Adrenal gland (tissue), 19 donors: ENCODE measurements at regions of chr18 and their contacts with region 1.

Region 1: GRCh38 chr18:5879479-5879882 is 15.8 kb downstream of the TMEM200C start:
- DNase-seq: no peak
- H3K4me3 ChIP-seq: no peak overlapping the region
- H3K27ac ChIP-seq: no peak overlapping the region
- H3K4me1 ChIP-seq: no peaks in the 10 kb centered on the region
- H3K27me3 ChIP-seq: no peaks in the 10 kb centered on the region
- CTCF ChIP-seq: peak; percentile 67 to 88 (median 80)
- POLR2A ChIP-seq: no peak

Region 2: DNA sequence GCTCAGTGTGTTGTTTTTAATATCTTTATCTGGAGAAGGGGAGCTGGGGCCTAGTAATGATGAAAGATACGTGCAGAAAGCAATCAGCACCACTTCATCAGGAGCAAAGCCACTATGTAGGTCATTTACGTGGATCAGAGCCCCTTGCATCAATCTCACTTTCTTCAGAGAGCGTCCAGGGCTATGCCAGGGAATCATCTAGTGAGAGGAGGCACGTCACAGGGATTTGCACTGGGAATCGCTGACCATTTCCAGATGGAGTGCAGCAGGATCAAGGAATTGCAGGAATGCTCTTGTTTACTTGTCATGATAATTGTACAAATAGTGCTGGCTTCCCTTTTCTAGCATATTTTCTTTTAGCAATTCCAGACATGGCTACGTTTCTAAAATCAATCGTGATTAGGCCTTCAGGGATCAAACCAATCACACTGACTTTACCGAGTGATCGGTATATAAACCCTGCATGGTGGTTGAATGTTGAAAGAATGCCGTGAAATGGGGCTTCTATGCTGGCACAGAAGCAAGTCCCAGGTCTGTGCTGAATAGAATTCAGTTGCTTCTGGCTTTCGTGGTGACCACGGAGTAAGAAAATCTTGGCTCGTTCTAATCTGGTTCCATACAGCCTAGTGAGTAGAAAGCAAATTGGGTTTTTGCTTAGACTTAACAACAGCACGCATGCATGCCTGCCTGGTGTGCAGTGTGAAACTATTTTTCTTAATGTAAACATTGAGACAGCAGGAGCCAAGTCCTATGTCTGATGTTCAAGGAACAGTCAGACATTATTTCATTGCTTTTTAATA is 107.0 kb before region 1 on chr18:
- intact Hi-C with region 1: no loop called
- DNase-seq: no peak
- H3K4me3 ChIP-seq: no peak overlapping the region
- H3K27ac ChIP-seq: no peak overlapping the region
- H3K4me1 ChIP-seq: no peaks in the 10 kb centered on the region
- H3K27me3 ChIP-seq: no peaks in the 10 kb centered on the region
- CTCF ChIP-seq: no peak
- POLR2A ChIP-seq: no peak

Region 3: GRCh38 chr18:6221602-6222014 is 342.1 kb after region 1 on chr18:
- intact Hi-C with region 1: loop called in 1 of 2 experiments (anchors 5 kb)
- DNase-seq: no peak
- H3K4me3 ChIP-seq: no peak overlapping the region
- H3K27ac ChIP-seq: no peak overlapping the region
- H3K4me1 ChIP-seq: no peaks in the 10 kb centered on the region
- H3K27me3 ChIP-seq: no peaks in the 10 kb centered on the region
- CTCF ChIP-seq: no peak
- POLR2A ChIP-seq: no peak

Region 4: DNA sequence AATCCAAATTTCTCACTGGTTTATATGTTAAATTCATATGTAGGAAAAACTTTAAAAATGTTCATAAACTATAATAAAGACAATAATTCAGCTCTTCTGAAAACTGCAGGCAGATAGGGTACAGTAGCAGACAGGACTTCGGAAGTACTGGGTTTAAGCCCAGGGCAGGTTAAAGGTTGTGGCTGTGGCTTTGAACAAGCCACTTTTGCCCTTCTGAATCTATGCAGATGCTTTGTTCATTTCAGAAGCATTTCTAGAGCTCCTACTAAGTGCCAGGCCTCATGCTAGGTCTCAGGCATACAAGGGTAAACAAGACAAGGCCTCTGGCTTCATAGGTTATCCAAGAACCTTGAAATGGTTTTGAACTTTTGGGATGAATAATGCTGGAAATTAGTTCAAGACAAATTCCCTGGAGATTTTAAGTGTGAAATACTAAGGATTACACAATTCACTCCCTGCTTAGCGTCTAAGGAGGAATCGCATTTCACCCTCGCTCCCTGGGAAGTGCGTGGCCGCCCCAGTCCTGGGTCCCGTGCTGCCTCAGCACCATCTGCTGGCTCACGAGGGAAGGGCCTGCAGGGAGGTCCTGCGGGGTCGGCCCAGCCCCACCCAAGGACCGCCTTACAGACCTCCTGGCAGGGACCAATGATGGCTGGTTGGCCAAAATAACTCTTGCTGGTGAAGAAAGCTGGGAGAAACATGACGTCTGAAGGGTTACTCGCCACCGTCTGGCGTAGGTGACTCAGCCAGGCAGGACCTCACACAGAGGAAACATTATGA is 602.9 kb after region 1 on chr18:
- intact Hi-C with region 1: loop called (anchors 5 kb)
- DNase-seq: peak; percentile 63 to 85 (median 79)
- H3K4me3 ChIP-seq: no peak overlapping the region
- H3K27ac ChIP-seq: no peak overlapping the region
- H3K4me1 ChIP-seq: no peaks in the 10 kb centered on the region
- H3K27me3 ChIP-seq: no peaks in the 10 kb centered on the region
- CTCF ChIP-seq: peak; percentile 60 to 93 (median 86)
- POLR2A ChIP-seq: no peak

Region 5: GRCh38 chr18:6885992-6886796 is 1006.7 kb after region 1 on chr18:
- intact Hi-C with region 1: loop called in 1 of 2 experiments (anchors 10 kb)
- DNase-seq: peak; percentile 43 to 79 (median 63)
- H3K4me3 ChIP-seq: no peak overlapping the region
- H3K27ac ChIP-seq: no peak overlapping the region
- H3K4me1 ChIP-seq: peaks cover 0 to 10% of the 10 kb centered on the region in 2 donors
- H3K27me3 ChIP-seq: no peaks in the 10 kb centered on the region
- CTCF ChIP-seq: peak; percentile 46 to 85 (median 76)
- POLR2A ChIP-seq: no peak